Naive thymus-derived CD4-positive, alpha-beta T cell (primary cell): ENCODE measurements at regions of chr11 and their contacts with region 1.

Region 1: GRCh38 chr11:122863704-122864326 is 18.7 kb upstream of the JHY start:
- DNase-seq: peak in 6 of 9 donors; percentile 19 to 51 (median 40)
- ATAC-seq: peak; percentile 60
- H3K4me3 ChIP-seq: no peak overlapping the region
- H3K4me3 Mint-ChIP-seq: no peak overlapping the region
- H3K27ac ChIP-seq: no peak overlapping the region
- H3K27ac Mint-ChIP-seq: no peak overlapping the region
- H3K4me1 ChIP-seq: no peaks in the 10 kb centered on the region
- H3K4me1 Mint-ChIP-seq: peaks cover 0 to 2% (median 0%) of the 10 kb centered on the region in 7 donors
- H3K27me3 ChIP-seq: no peaks in the 10 kb centered on the region
- H3K27me3 Mint-ChIP-seq: peaks cover 0 to 49% (median 0%) of the 10 kb centered on the region in 5 donors

Region 2: GRCh38 chr11:121983906-121984305 is 879.9 kb before region 1 on chr11:
- CTCF ChIA-PET with region 1: no interaction called
- POLR2A ChIA-PET with region 1: no interaction called
- intact Hi-C with region 1: no loop called
- DNase-seq: no peak
- ATAC-seq: no peak
- H3K4me3 ChIP-seq: no peak overlapping the region
- H3K4me3 Mint-ChIP-seq: no peak overlapping the region
- H3K27ac ChIP-seq: no peak overlapping the region
- H3K27ac Mint-ChIP-seq: no peak overlapping the region
- H3K4me1 ChIP-seq: no peaks in the 10 kb centered on the region
- H3K4me1 Mint-ChIP-seq: no peaks in the 10 kb centered on the region
- H3K27me3 ChIP-seq: no peaks in the 10 kb centered on the region
- H3K27me3 Mint-ChIP-seq: peaks cover 0 to 11% (median 6%) of the 10 kb centered on the region in 5 donors

Region 3: DNA sequence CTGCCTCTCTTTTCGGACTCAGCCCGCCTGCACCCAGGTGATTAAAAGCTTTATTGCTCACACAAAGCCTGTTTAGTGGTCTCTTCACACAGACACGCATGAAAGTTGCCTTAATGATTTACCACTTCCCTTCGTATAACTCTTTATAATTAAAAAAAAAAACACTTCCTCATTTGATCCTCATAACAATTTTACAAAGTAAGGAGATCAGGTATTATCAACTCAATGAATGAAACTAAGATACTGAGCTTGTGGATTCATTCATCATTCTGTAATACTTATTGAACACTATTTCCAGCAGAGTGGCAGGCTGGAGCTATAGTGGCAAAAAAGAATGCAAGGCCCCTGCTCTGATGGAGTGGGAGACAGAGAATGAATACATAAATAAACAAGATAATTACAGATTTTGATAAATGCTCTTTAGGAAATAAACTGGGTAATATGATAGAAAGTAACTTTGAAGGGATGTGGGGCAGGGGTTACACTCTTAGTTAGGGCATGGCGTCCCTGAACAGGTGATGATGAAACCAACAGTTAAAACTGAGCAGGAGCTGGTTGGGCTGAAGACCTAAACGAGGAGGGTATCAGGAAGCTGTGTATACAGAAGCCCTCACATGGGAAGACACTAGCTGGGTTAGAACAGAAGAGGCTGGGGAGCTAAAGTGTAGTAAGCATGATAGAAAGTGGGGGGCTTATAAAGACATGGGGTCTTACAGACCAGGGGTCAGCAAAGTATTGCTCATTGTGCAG is 30.9 kb before region 1 on chr11:
- CTCF ChIA-PET with region 1: no interaction called
- POLR2A ChIA-PET with region 1: no interaction called
- intact Hi-C with region 1: no loop called
- DNase-seq: no peak
- ATAC-seq: no peak
- H3K4me3 ChIP-seq: no peak overlapping the region
- H3K4me3 Mint-ChIP-seq: peak overlapping the region in 3 of 10 donors; percentile 8 to 35 (median 20)
- H3K27ac ChIP-seq: no peak overlapping the region
- H3K27ac Mint-ChIP-seq: peak overlapping the region in 6 of 9 donors; percentile 5 to 67 (median 32)
- H3K4me1 ChIP-seq: peaks cover 0 to 14% of the 10 kb centered on the region in 2 donors
- H3K4me1 Mint-ChIP-seq: peaks cover 0 to 24% (median 18%) of the 10 kb centered on the region in 7 donors
- H3K27me3 ChIP-seq: no peaks in the 10 kb centered on the region
- H3K27me3 Mint-ChIP-seq: peaks cover 0 to 10% (median 0%) of the 10 kb centered on the region in 5 donors

Region 4: DNA sequence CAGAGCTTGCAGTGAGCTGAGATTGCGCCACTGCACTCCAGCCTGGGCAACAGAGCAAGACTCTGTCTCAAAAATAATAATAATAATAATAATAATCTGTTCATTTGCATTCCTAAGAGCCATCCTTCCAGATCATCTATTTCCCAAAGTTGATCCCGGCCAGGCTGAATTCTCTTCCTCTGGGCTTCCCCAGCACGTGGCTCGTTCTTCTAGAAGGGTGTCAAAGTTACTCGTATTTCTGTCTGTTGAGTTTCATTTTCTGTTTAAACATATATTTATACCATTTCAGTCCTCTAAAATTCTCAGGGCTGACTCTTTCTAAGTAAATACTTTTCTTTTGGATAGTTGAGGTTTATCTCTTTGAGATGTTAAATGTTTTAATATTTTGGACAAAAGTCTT is 13.9 kb after region 1 on chr11:
- CTCF ChIA-PET with region 1: interaction called, 11 read pairs
- POLR2A ChIA-PET with region 1: interaction called, 3 read pairs
- intact Hi-C with region 1: no loop called
- DNase-seq: no peak
- ATAC-seq: no peak
- H3K4me3 ChIP-seq: no peak overlapping the region
- H3K4me3 Mint-ChIP-seq: peak overlapping the region in 1 of 10 donors; percentile 65
- H3K27ac ChIP-seq: no peak overlapping the region
- H3K27ac Mint-ChIP-seq: peak overlapping the region in 1 of 9 donors; percentile 29
- H3K4me1 ChIP-seq: peaks cover 0 to 5% of the 10 kb centered on the region in 2 donors
- H3K4me1 Mint-ChIP-seq: peaks cover 0 to 11% (median 6%) of the 10 kb centered on the region in 7 donors
- H3K27me3 ChIP-seq: no peaks in the 10 kb centered on the region
- H3K27me3 Mint-ChIP-seq: peaks cover 0 to 15% (median 0%) of the 10 kb centered on the region in 5 donors

Region 5: GRCh38 chr11:122951211-122951610 is 87.4 kb after region 1 on chr11:
- CTCF ChIA-PET with region 1: no interaction called
- POLR2A ChIA-PET with region 1: no interaction called
- intact Hi-C with region 1: no loop called
- DNase-seq: no peak
- ATAC-seq: no peak
- H3K4me3 ChIP-seq: no peak overlapping the region
- H3K4me3 Mint-ChIP-seq: no peak overlapping the region
- H3K27ac ChIP-seq: no peak overlapping the region
- H3K27ac Mint-ChIP-seq: no peak overlapping the region
- H3K4me1 ChIP-seq: no peaks in the 10 kb centered on the region
- H3K4me1 Mint-ChIP-seq: peaks cover 0 to 11% (median 0%) of the 10 kb centered on the region in 7 donors
- H3K27me3 ChIP-seq: no peaks in the 10 kb centered on the region
- H3K27me3 Mint-ChIP-seq: no peaks in the 10 kb centered on the region

Region 6: GRCh38 chr11:123054301-123055065 is 190.7 kb after region 1 on chr11:
- CTCF ChIA-PET with region 1: interaction called, 19 read pairs
- POLR2A ChIA-PET with region 1: interaction called, 3 read pairs
- intact Hi-C with region 1: loop called (anchors 1 to 10 kb)
- DNase-seq: peak in 7 of 9 donors; percentile 52 to 75 (median 67)
- ATAC-seq: peak; percentile 87
- H3K4me3 ChIP-seq: peak overlapping the region; percentile 11
- H3K4me3 Mint-ChIP-seq: peak overlapping the region in 9 of 10 donors; percentile 20 to 100 (median 65)
- H3K27ac ChIP-seq: peak overlapping the region; percentile 38
- H3K27ac Mint-ChIP-seq: peak overlapping the region; percentile 69 to 100 (median 92)
- H3K4me1 ChIP-seq: peaks cover 50 to 56% of the 10 kb centered on the region in 2 donors
- H3K4me1 Mint-ChIP-seq: peaks cover 42 to 60% (median 55%) of the 10 kb centered on the region in 7 donors
- H3K27me3 ChIP-seq: no peaks in the 10 kb centered on the region
- H3K27me3 Mint-ChIP-seq: no peaks in the 10 kb centered on the region

Region 7: GRCh38 chr11:124123622-124124021 is 1259.8 kb after region 1 on chr11:
- CTCF ChIA-PET with region 1: no interaction called
- POLR2A ChIA-PET with region 1: no interaction called
- intact Hi-C with region 1: no loop called
- DNase-seq: no peak
- ATAC-seq: no peak
- H3K4me3 ChIP-seq: no peak overlapping the region
- H3K4me3 Mint-ChIP-seq: no peak overlapping the region
- H3K27ac ChIP-seq: no peak overlapping the region
- H3K27ac Mint-ChIP-seq: peak overlapping the region in 2 of 9 donors; percentile 9 to 31
- H3K4me1 ChIP-seq: no peaks in the 10 kb centered on the region
- H3K4me1 Mint-ChIP-seq: peaks cover 0 to 7% (median 0%) of the 10 kb centered on the region in 7 donors
- H3K27me3 ChIP-seq: no peaks in the 10 kb centered on the region
- H3K27me3 Mint-ChIP-seq: peaks cover 0 to 3% (median 0%) of the 10 kb centered on the region in 5 donors